ENCODE measurements at regions of chr9 and their contacts with region 1.

Region 1: DNA sequence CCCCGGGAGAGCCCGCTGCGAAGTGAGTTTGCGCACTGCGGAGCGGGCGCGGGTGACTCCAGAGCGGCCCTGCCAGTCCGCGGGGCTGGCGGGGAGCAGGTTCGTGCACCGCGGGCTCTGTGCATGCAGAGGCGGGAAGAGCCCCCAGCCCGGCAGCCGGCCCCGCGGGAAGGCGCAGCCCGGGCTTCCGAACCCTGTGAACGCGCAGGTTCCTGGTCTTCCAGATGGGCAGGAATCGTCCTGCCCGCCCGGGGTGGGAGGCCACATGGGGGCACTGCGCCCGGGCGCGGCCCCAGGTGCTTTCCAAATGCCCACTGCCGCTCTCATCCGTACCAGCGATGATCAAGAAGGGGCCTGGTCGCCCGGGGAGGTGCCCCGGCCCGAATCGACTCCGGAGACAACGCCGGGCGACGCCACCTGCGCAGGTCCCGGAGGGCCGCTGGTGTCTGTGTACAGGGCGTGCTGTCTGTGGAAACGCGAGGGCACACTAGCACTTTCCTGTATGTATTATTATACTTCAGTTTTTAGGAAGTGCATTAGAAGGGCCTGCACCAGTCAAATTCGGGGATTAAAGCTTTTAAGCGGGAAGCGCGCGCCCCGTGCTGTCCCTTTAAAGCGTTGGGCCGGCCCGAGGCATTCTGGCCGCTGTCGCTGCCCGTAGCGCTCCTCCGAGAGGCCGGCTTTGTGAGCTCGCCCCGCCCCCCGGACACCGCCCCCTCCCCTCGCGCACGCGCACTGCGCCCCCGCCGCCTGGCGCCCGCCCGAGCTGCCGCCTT is at the start of gene WDR5:
- DNase-seq: peak; percentile 43 to 93
- H3K4me3 ChIP-seq: peak within 1 kb of the TSS; percentile 77 to 95 (median 88)
- H3K27ac ChIP-seq: peak within 1 kb of the TSS; percentile 88
- H3K4me1 ChIP-seq: peaks cover 8 to 30% (median 20%) of the 10 kb centered on the region in 4 experiments
- H3K27me3 ChIP-seq: no peaks in the 10 kb centered on the region
- CTCF ChIP-seq: no peak
- EP300 ChIP-seq: no peak
- POLR2A ChIP-seq: peak in 1 of 2 experiments; percentile 22; a peak in 1 of 3 replicates
- RAD21 ChIP-seq: no peak
- total RNA-seq, gene WDR5: 68.1 and 69.7 TPM in 2 replicates

Region 2: DNA sequence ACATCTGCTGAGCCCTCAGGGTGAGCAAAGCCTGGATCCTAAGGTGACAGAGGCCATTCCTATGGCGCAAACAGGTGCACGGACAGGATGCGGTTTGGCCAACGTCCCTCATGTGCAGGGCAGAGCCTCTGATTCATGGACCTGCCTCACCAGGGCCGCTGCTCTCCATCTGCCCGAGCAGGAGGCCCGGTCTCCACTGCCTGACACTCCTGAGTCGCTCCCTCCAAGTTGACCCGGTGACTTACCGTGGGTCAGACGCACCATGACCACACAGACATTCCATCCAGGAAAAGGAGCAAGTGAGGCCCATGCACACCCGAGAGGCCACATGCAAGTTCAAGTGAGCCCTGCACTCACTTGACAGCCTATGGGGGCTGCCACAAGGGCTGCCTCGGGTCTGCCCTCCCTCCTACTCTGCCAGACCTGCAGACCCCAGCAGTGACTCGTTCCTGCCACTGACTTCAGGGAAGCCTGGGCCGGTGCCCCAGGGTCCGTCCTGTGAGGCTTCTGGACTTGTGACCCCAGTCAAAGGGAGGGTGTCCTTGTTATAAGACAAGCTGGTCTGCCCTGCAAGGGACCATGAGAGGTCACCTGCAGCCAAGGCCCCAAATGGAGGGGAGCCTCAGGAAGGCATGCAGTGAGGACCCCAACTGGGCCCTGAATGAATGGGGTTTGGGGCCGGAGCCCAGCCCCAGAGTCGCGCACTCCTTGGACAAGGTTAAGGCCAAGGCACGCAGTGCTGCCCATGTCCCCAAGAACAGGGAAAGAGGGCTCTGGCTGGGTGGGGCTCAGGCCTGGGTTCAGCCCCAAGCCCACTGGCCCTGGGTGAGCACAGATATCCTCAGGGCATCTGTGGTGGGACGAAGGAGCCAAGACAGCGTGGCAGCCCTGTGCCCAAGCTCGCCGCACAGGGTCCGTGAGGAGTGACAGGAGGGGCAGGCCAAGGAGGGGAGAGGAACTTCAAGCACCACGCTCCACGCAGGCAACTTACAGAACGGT is 100.2 kb before region 1 on chr9:
- CTCF ChIA-PET with region 1: no interaction called
- POLR2A ChIA-PET with region 1: no interaction called
- DNase-seq: no peak
- H3K4me3 ChIP-seq: no peak overlapping the region
- H3K27ac ChIP-seq: no peak overlapping the region
- H3K4me1 ChIP-seq: no peaks in the 10 kb centered on the region
- H3K27me3 ChIP-seq: no peaks in the 10 kb centered on the region
- CTCF ChIP-seq: no peak
- EP300 ChIP-seq: no peak
- POLR2A ChIP-seq: no peak
- RAD21 ChIP-seq: no peak

Region 3: DNA sequence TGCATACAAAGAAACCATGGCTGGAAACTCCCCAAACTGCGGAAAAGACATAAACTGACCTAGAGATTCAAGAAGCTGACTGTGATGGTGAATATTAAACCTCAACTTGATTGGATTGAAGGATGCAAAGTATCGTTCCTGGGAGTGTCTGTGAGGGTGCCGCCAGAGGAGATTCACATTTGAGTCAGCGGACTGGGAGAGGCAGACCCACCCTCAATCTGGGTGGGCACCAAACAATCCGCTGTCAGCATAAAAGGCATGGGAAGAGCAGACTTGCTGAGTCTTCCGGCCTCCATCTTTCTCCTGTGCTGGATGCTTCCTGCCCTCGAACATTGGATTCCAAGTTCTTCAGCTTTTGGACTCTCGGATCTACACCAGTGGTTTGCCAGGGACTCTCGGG is 24.5 kb before region 1 on chr9:
- CTCF ChIA-PET with region 1: no interaction called
- POLR2A ChIA-PET with region 1: no interaction called
- DNase-seq: no peak
- H3K4me3 ChIP-seq: no peak overlapping the region
- H3K27ac ChIP-seq: no peak overlapping the region
- H3K4me1 ChIP-seq: no peaks in the 10 kb centered on the region
- H3K27me3 ChIP-seq: no peaks in the 10 kb centered on the region
- CTCF ChIP-seq: no peak
- EP300 ChIP-seq: no peak
- POLR2A ChIP-seq: no peak
- RAD21 ChIP-seq: no peak

Region 4: DNA sequence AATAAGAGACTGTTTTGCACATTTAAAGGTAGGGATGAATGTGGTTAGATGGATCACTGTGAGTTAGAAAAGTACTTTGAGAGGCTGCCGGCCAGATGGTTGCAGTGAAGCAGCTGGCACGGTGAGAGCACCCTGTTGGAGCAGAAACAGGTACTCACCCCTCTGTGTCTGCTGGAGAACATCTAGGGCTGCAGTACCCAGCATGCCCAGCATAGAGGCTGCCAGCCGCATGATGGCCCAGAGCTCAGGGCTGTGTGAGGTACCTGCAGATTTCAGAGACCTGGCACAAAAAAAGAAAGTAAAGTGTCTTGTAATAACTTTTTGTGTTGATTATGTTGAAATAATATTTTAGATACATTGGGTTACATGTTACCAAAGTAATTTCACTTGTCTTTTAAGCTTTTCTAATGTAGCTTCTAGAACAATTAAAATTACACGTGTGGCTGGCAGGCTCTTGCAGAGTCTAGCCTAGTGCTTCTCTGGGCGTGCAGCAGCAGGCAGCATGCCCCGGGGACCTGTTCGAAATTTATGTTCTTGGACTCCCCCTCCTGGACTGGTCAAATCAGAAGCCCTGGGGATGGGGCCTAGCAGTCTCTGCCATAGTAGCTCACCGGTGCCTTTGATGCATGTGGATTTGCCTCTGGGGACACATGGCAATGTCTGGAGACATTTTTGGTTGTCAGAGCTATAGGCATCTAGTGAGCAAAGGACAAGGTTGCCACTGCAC is 11.4 kb after region 1 on chr9:
- CTCF ChIA-PET with region 1: interaction called, 6 read pairs
- POLR2A ChIA-PET with region 1: interaction called, 10 read pairs
- DNase-seq: no peak
- H3K4me3 ChIP-seq: no peak overlapping the region
- H3K27ac ChIP-seq: no peak overlapping the region
- H3K4me1 ChIP-seq: no peaks in the 10 kb centered on the region
- H3K27me3 ChIP-seq: no peaks in the 10 kb centered on the region
- CTCF ChIP-seq: no peak
- EP300 ChIP-seq: no peak
- POLR2A ChIP-seq: no peak
- RAD21 ChIP-seq: no peak

Region 5: GRCh38 chr9:134163353-134164196 is 28.0 kb after region 1 on chr9:
- CTCF ChIA-PET with region 1: interaction called, 7 read pairs
- POLR2A ChIA-PET with region 1: interaction called, 18 read pairs
- DNase-seq: peak in 1 of 2 experiments; percentile 72
- H3K4me3 ChIP-seq: no peak overlapping the region; a peak in 1 of 8 replicates
- H3K27ac ChIP-seq: no peak overlapping the region
- H3K4me1 ChIP-seq: peaks cover 0 to 9% (median 7%) of the 10 kb centered on the region in 4 experiments; a peak in 5 of 7 replicates
- H3K27me3 ChIP-seq: no peaks in the 10 kb centered on the region
- CTCF ChIP-seq: no peak
- EP300 ChIP-seq: no peak
- POLR2A ChIP-seq: no peak
- RAD21 ChIP-seq: no peak

Measured in H1 (cell line).